ENCODE measurements at regions of chr14 and their contacts with region 1.

Region 1: DNA sequence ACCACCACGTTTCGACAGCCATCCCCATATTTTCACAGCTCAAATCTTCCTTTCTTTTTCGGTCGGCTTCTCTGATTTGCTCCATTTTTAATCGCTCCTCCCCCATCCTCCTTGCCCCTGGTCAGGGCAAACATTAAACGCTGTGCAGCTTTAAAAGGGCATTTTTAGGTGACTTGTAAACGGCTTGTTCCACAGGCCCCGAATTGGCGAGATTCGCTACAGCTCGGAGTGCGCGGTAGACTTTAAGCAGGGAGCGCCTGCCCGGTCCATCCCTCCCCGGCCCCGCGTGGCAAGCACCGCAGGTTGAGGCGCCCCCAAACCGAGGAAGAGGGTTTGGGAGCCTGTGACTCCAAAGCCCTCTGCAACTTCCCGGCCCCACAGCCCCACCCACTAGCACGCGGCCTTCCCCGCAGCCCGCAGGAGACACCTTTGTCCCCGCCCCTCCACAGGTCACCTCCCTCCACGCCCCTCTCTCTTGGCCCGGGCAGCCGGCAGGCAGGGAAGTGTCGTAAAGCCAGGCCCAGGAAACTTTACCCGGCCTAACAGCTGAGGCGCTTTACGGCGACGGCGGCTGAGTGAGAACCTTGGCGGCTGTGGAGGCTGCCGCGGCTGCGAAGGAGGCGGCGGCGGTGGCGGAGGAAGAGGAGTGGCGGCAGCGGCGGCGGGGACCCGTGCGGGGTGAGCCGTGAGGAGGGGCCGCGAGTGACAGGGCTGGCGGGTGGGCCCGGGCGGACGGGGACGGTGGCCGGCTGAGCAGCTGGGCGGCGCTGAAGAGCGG is at the start of gene NAA30:
- DNase-seq: peak; percentile 86
- ATAC-seq: peak; percentile 86
- H3K4me3 ChIP-seq: peak within 1 kb of the TSS; percentile 89 to 95 (median 94)
- H3K27ac ChIP-seq: peak within 1 kb of the TSS; percentile 81
- H3K4me1 ChIP-seq: peaks cover 35% of the 10 kb centered on the region
- H3K27me3 ChIP-seq: no peaks in the 10 kb centered on the region; a peak in 1 of 5 replicates
- CTCF ChIP-seq: 0 out of 2 replicates have a peak, but pooled peaks have one; percentile 2
- EP300 ChIP-seq: no peak
- POLR2A ChIP-seq: peak; percentile 53 to 83; a peak in 3 of 4 replicates
- RAD21 ChIP-seq: no peak
- total RNA-seq, gene NAA30: 18.4 and 21.6 TPM in 2 replicates

Region 2: DNA sequence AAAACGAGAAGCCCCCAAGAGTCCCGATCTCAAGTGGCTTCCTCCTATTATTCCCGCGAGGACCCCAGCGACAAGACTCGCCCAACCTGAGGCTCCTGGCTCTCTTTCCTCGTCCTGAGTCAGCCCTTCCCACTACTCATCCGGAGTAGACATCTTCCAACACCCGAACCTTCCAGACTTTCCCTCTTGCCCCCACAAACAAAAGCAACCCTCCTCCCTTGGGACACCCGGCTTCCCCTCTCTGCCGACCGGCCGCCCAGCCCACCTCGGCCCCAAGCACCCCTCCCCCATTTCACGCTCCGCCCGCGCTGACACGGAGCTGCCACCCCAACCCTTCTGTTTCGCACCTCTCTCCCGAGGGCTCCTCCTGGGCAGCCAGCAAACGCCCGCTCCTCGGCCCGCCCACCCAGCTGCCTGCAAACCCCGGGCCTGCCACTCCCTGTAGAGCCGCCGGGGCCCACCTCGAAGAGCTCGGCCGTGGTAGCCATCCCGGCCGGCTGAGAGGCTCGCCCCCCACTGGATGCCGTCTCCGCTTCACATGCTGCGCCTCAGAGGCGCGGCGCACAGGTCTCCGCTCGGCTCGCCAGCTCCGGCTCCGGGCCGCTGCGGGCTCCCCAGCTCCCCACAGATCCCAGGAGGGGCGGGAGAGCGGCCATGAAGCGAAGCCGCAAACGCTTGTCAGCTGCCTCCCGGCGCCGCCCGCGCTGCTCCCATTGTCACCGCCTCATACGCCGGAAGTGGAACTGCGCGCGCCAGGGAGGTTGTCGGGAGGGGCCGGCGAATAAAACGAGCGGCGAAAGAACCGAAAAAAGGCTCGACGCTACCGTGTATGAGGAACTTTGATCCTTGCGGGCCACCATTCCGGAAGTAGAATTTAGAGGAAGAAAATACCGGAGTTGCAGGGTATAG is 121.8 kb before region 1 on chr14 and contains the starts of genes AP5M1 and EXOC5:
- CTCF ChIA-PET with region 1: no interaction called
- POLR2A ChIA-PET with region 1: interaction called, 7 read pairs
- in situ Hi-C with region 1: no loop called
- intact Hi-C with region 1: loop called (anchors 5 kb)
- DNase-seq: peak; percentile 86
- ATAC-seq: peak; percentile 95
- H3K4me3 ChIP-seq: peak within 1 kb of the TSS; percentile 63 to 94 (median 84)
- H3K27ac ChIP-seq: peak within 1 kb of the TSS; percentile 90
- H3K4me1 ChIP-seq: peaks cover 56% of the 10 kb centered on the region
- H3K27me3 ChIP-seq: no peaks in the 10 kb centered on the region; a peak in 1 of 5 replicates
- CTCF ChIP-seq: peak; percentile 25
- EP300 ChIP-seq: peak; percentile 12 to 38; a peak in 1 of 4 replicates
- POLR2A ChIP-seq: peak in 1 of 2 experiments; percentile 65; a peak in 2 of 4 replicates
- RAD21 ChIP-seq: peak; percentile 34; the same call in 1 of the 2 replicates
- total RNA-seq, gene AP5M1: 35.0 and 49.4 TPM in 2 replicates
- total RNA-seq, gene EXOC5: 43.8 and 76.6 TPM in 2 replicates

Region 3: DNA sequence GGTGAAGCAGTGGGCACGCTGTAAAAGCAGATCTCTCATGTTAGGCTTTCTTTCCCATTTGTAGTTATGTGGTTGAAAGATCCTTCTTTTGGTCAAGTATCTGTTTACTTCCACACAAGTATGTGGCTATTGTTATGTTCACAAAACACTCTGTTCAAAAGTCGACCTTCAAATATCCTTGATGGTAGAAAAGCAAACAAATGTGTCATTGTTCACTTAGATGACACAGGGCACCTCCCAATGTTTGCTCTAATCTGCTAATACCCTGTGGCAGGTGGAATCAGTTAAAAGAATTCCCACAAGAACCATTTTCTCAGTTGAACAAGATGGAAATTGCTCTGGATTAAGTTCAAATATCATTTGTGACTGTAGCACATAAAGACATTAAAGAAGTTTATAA is 43.5 kb before region 1 on chr14:
- CTCF ChIA-PET with region 1: no interaction called
- POLR2A ChIA-PET with region 1: interaction called, 4 read pairs
- in situ Hi-C with region 1: no loop called
- intact Hi-C with region 1: loop called (anchors 2 kb)
- DNase-seq: peak; percentile 87
- ATAC-seq: peak; percentile 87
- H3K4me3 ChIP-seq: no peak overlapping the region
- H3K27ac ChIP-seq: peak overlapping the region; percentile 25
- H3K4me1 ChIP-seq: peaks cover 45% of the 10 kb centered on the region
- H3K27me3 ChIP-seq: no peaks in the 10 kb centered on the region
- CTCF ChIP-seq: no peak
- EP300 ChIP-seq: peak in 1 of 2 experiments; percentile 78; a peak in 2 of 4 replicates
- POLR2A ChIP-seq: no peak
- RAD21 ChIP-seq: no peak

Region 4: DNA sequence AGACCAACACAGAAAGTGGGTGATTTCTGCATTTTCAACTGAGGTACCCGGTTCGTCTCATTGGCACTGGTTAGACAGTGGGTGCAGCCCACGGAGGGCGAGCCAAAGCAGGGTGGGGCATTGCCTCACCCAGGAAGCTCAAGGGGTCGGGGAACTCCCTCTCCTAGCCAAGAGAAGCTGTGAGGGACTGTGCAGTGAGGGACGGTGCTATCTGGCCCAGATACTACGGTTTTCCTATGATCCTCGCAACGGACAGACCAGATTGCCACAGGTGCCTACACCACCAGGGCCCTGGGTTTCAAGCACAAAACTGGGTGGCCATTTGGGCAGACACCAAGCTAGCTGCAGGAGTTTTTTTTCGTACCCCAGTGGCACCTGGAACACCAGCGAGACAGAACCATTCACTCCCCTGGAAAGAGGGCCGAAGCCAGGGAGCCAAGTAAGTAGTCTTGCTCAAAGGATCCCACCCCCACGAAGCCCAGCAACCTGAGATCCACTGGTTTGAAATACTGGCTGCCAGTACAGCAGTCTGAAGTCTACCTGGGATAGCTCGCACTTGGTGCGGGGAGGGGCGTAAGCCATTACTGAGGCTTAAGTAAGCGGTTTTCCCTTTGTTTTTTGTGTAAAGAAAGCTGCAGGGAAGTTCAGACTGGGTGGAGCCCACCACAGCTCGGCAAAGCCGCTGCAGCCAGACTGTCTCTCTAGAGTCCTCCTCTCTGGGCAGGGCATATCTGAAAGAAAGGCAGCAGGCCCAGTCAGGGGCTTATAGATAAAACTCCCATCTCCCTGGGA is 25.4 kb before region 1 on chr14:
- CTCF ChIA-PET with region 1: no interaction called
- POLR2A ChIA-PET with region 1: interaction called, 10 read pairs
- in situ Hi-C with region 1: no loop called
- intact Hi-C with region 1: no loop called
- DNase-seq: peak; percentile 65
- ATAC-seq: peak; percentile 95
- H3K4me3 ChIP-seq: peak overlapping the region; percentile 1 to 34 (median 5); a peak in 2 of 6 replicates
- H3K27ac ChIP-seq: no peak overlapping the region
- H3K4me1 ChIP-seq: peaks cover 35% of the 10 kb centered on the region
- H3K27me3 ChIP-seq: peaks cover 0 to 10% of the 10 kb centered on the region in 2 experiments; a peak in 2 of 5 replicates
- CTCF ChIP-seq: no peak
- EP300 ChIP-seq: no peak
- POLR2A ChIP-seq: no peak
- RAD21 ChIP-seq: no peak

Measured in HepG2 (cell line).